MCF 10A (cell line): ENCODE measurements at regions of chr1 and their contacts with region 1.

Region 1: DNA sequence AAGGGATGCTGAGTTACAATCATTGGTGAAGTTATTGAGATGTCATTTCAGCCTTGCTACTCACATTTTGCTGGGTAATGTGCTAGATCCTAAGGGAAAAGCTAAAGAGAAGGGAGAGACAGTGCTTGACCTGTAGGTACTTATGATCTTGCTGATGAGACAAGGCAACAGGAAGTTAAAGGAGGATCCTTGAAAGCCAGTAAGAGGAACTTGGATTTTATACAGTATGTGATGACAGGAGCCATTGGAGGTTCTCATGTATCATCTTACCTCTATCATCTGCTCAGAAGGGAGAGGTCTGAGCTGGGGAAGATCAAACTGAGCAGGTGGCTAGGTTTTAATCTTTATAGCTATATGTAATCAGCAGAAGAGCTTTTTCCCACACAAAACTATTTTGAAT is 6.3 kb downstream of the APOBEC4 start:
- DNase-seq: no peak
- H3K4me3 Mint-ChIP-seq: no peak overlapping the region
- H3K27ac Mint-ChIP-seq: no peak overlapping the region
- H3K4me1 Mint-ChIP-seq: no peaks in the 10 kb centered on the region
- H3K27me3 Mint-ChIP-seq: no peaks in the 10 kb centered on the region
- CTCF ChIP-seq: no peak

Region 2: GRCh38 chr1:183635606-183636333 is 11.0 kb before region 1 on chr1 and contains the start of gene ARPC5:
- CTCF ChIA-PET with region 1: interaction called, 11 read pairs
- POLR2A ChIA-PET with region 1: interaction called, 6 read pairs
- intact Hi-C with region 1: no loop called
- DNase-seq: peak; percentile 99
- H3K4me3 Mint-ChIP-seq: peak within 1 kb of the TSS; percentile 100
- H3K27ac Mint-ChIP-seq: peak within 1 kb of the TSS; percentile 97
- H3K4me1 Mint-ChIP-seq: peaks cover 15% of the 10 kb centered on the region
- H3K27me3 Mint-ChIP-seq: no peaks in the 10 kb centered on the region
- CTCF ChIP-seq: no peak
- total RNA-seq, gene ARPC5: 195 and 240 TPM in 2 replicates